OCI-LY7 (cell line): ENCODE measurements at regions of chr15 and their contacts with region 1.

Region 1: DNA sequence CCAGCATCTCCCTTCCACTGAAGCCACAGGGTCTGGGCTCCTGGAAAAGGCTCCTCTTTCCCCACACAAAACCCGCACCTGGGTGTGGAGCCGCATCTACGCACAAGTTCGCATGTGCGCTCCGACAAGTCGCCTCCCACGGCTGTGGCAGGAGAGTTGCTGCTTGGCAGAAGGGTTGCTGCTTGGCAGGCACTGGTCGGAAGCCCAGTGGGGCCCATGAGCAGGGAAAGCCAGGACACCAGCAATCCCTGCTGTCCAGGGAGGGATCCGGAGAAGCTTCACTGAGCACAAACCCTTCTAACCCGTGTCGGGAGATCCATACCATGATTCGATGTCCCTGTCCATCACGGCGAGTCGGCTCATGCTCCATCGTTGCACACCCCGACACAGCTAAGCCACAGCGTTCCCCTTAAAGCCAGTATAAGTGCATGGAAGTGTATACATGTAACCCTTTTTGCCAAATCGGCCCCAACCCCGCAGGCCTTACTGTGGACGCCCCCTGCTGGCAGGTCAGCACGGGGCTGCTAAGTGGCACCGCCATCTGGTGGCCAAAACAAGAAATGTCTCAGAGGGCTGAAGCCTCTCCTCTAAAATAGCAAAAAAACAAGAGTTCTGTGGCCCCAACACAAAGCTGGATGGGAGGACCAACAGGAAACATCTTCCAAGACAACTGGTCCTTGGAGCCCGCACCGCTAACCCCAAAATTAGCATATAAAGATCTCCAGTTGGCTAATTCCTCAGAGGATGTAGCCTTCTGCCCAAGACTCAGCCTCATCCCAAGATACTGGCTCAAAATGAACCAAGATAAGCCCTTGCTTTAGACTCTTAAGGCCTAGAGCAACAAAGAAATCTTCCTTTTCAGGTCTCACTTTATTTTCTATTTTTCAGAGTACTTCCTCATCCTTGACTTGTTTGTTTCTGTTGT is 8.3 kb downstream of the ANKRD63 start:
- DNase-seq: peak; percentile 88
- H3K4me3 ChIP-seq: no peak overlapping the region
- H3K27ac ChIP-seq: no peak overlapping the region
- H3K4me1 ChIP-seq: peaks cover 13% of the 10 kb centered on the region
- CTCF ChIP-seq: peak; percentile 100

Region 2: GRCh38 chr15:39887832-39888231 is 386.8 kb before region 1 on chr15:
- CTCF ChIA-PET with region 1: no interaction called
- POLR2A ChIA-PET with region 1: no interaction called
- intact Hi-C with region 1: loop called (anchors 5 kb)
- DNase-seq: peak; percentile 8
- H3K4me3 ChIP-seq: no peak overlapping the region
- H3K27ac ChIP-seq: no peak overlapping the region
- H3K4me1 ChIP-seq: no peaks in the 10 kb centered on the region
- CTCF ChIP-seq: peak; percentile 60

Region 3: GRCh38 chr15:40108855-40109735 is 165.5 kb before region 1 on chr15 and contains the start of gene BMF:
- CTCF ChIA-PET with region 1: interaction called, 6 read pairs
- POLR2A ChIA-PET with region 1: no interaction called
- intact Hi-C with region 1: loop called (anchors 5 kb)
- DNase-seq: peak; percentile 98
- H3K4me3 ChIP-seq: peak within 1 kb of the TSS; percentile 77
- H3K27ac ChIP-seq: peak within 1 kb of the TSS; percentile 68
- H3K4me1 ChIP-seq: peaks cover 72% of the 10 kb centered on the region
- CTCF ChIP-seq: peak; percentile 68
- total RNA-seq, gene BMF: 4.8 and 5.3 TPM in 2 replicates

Region 4: GRCh38 chr15:40121911-40122638 is 152.5 kb before region 1 on chr15:
- CTCF ChIA-PET with region 1: no interaction called
- POLR2A ChIA-PET with region 1: no interaction called
- intact Hi-C with region 1: no loop called
- DNase-seq: no peak
- H3K4me3 ChIP-seq: no peak overlapping the region
- H3K27ac ChIP-seq: no peak overlapping the region
- H3K4me1 ChIP-seq: peaks cover 39% of the 10 kb centered on the region
- CTCF ChIP-seq: no peak

Region 5: DNA sequence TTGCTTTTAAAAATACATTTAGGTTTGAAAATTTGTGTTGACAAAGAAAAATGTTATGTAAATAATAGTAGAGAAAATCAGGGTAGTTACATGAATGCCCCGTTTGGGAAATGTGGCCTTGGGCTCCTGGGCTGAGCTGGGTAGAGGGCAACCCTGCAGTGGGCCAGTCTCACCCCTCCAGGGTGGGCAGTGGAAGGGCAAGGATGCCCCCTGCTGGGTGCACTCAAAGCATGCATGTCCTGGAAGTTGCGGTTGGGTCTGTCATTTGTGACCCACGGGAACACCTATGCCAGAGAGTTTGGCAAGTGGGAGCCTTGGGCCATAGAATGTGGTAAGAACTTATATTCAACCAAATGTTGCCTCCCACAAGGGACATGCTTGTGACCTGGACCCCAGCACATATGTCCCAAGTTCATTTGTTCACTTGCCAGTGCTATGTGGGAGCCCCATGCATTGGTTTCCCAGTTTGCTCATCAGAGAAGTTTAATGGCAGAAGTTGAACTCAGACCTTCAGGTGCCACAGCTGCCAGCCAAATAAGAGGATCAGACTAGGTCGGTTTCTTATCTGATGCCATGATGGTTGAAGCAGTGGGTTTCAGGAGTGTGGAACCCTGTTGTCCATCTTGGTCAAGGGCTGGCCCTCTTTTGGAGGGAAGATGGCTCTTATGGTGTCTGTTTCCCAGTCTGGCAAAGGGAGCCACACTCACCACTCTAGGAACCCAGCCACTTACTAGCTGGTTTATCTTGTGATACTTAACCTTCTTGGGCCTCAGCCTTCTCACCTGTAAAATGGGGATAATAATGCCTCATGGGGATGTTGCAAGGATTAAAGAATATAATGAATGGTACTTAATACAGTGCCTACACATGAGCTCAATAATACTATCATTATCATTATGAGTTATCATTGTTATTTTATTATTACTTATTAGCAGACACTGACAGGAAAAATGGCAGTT is 35.7 kb after region 1 on chr15:
- CTCF ChIA-PET with region 1: interaction called, 3 read pairs
- POLR2A ChIA-PET with region 1: interaction called, 3 read pairs
- intact Hi-C with region 1: loop called (anchors 1 kb)
- DNase-seq: peak; percentile 60
- H3K4me3 ChIP-seq: no peak overlapping the region
- H3K27ac ChIP-seq: no peak overlapping the region
- H3K4me1 ChIP-seq: no peaks in the 10 kb centered on the region
- CTCF ChIP-seq: peak; percentile 83